Lower leg skin (tissue), 4 donors: ENCODE measurements at regions of chr11 and their contacts with region 1.

Region 1: GRCh38 chr11:76380967-76381719 is at the starts of genes GVQW3 and THAP12:
- DNase-seq: peak; percentile 96 to 99
- H3K4me3 ChIP-seq: peak within 1 kb of the TSS; percentile 95
- CTCF ChIP-seq: no peak
- POLR2A ChIP-seq: no peak
- total RNA-seq, gene GVQW3: 0.42 to 1.5 (median 0.98) TPM
- total RNA-seq, gene THAP12: 15.6 to 25.4 (median 22.3) TPM

Region 2: DNA sequence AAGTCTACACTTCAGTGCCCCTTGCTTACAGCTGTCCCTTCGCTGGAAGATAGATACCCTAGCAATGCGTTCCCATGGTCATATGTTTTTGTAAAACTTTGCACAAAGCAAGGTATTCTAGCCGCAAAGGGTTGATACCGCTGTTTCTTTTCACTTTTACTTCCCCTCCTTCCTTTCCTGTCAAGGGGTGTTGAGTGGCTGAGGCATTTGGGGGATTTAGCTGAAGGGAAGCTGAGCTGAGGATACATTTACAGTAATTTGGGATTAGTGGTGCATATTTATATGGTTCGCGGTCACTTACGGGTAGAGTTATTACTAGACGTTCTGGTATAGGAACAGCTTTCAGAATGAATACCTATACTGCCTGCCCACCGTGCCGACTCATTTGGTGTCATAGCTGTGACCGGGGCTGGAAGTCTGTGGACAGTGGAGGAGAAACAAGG is 87.9 kb before region 1 on chr11:
- intact Hi-C with region 1: no loop called
- DNase-seq: no peak
- H3K4me3 ChIP-seq: no peak overlapping the region
- CTCF ChIP-seq: no peak
- POLR2A ChIP-seq: no peak

Region 3: GRCh38 chr11:76444384-76445123 is 63.4 kb after region 1 on chr11 and contains the start of gene EMSY:
- intact Hi-C with region 1: loop called (anchors 5 kb)
- DNase-seq: peak; percentile 98
- H3K4me3 ChIP-seq: peak within 1 kb of the TSS; percentile 91
- CTCF ChIP-seq: no peak
- POLR2A ChIP-seq: peak in 1 of 2 donors; percentile 96
- total RNA-seq, gene EMSY: 12.8 to 45.0 (median 14.7) TPM

Region 4: DNA sequence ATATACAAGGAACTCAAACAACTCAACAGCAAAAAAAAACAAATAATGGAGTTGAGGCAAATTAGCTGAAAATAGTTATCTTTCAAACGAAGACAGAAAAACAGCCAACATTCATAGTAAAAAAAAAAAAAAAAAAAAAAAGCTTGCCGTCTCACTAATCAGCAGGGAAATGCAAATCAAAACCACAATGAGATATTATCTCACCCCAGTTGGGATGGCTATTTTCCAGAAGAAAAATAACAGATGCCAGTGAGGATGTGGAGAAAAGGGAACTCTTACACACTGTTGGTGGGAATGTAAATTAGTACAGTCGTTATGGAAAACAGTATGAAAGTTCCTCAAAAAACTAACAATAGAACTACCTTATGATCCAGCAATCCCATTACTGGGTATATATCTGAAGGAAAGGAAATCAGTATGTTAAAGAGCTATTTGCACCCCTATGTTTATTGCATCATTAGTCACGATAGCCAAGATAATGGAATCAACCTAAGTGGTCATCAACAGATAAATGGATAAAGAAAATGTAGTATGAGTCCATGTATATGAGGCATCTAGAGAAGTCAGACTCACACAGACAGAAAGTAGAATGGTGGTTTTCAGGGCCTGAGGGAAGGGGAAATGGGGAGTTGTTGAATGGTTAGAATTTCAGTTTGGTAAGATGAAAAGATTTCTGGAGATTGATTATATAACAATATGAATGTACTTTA is 1863.6 kb after region 1 on chr11:
- intact Hi-C with region 1: loop called (anchors 5 kb)
- DNase-seq: no peak
- H3K4me3 ChIP-seq: no peak overlapping the region
- CTCF ChIP-seq: no peak
- POLR2A ChIP-seq: no peak